ENCODE measurements at regions of chr1 and their contacts with region 1.

Region 1: DNA sequence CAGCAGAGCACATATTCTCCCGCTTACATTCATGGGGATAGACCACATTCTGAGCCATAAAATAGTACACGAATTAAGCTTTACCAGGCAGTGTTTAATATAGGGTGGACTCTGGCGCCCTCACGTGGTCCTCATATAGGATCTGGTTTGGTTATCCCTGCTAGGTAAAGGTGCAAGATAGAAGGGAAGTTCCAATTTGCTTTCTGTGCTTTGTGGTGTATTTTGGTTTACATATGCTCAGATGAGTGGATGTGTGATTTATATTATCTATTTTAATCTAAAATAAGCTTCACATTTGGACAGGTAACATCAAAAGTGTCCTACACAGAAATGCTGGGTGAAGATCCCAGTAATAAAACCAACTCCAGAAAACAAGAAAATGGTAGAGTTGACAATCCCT is 3.6 kb downstream of the CR1 start:
- DNase-seq: peak; percentile 55 to 69
- ATAC-seq: peak; percentile 89 to 92
- H3K4me3 ChIP-seq: no peak overlapping the region
- H3K27ac ChIP-seq: no peak overlapping the region
- H3K4me1 ChIP-seq: no peaks in the 10 kb centered on the region
- CTCF ChIP-seq: peak; percentile 92
- EP300 ChIP-seq: no peak
- POLR2A ChIP-seq: no peak
- RAD21 ChIP-seq: peak; percentile 92 to 95

Region 2: DNA sequence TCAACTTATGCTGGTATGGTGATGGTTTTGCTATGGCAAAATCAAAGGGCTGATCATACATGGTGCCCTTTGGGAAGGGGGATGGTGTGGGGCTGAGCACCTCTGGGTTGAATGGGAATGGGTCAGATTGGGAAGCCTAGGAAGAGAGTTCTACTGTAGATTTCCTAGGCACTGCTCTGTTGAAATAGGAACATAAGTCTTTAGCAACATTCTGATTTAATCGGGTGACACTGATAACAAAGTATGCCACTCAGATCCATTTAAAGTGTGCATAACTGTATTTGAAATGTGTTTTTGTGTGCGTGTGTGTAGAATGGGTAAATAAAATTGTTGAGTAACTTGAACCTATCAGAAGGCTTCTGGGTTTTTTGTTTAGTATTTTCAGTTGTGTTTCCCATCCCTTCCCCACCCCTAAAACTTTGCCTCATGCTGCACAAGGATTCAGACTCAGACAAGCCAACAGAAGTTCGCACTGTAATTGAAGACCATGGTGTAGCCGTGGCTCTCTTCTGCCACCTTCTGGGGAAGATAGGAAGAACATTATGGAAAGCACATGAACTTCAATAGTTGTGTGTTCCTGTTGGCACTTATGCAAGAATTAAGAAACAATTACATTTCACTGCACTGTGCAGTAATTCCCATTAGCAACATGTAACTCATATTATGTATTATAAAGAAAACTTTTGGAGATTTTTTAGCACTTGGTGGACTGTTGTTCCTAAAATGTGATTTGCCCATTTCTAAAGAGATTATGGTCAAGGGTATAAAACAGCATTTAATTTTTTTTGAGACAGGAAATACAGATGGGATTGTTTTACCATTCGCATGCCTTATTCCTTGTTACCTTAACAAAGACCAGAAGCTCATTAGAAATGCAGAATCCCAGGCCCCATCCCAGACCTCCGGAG is 421.8 kb before region 1 on chr1:
- CTCF ChIA-PET with region 1: interaction called, 44 read pairs
- POLR2A ChIA-PET with region 1: no interaction called
- DNase-seq: peak; percentile 62 to 78
- ATAC-seq: peak; percentile 67 to 93; a peak in 5 of 6 replicates
- H3K4me3 ChIP-seq: no peak overlapping the region
- H3K27ac ChIP-seq: peak overlapping the region; percentile 12 to 29; a peak in 1 of 6 replicates
- H3K4me1 ChIP-seq: peaks cover 28% of the 10 kb centered on the region
- CTCF ChIP-seq: peak; percentile 96
- EP300 ChIP-seq: no peak
- POLR2A ChIP-seq: no peak
- RAD21 ChIP-seq: peak; percentile 90 to 98

Region 3: DNA sequence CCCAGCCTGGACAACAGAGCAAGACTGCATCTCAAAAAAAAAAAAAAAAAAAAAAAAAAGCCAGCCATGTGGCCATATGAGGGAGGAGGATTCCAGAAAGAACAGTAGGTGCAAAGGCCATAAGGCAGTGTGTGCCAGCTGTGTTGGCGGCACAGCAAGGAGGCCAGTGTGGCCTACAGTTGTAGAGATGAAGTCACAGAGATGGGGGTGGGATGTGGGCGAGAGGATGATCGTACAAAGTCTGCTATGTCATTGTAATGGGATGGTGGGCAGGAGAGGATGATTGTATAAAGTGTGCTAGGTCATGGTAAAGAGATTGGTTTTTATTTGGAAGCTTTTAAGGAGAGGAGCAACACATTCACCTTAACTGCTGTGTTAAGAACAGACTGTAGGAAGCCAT is 13.4 kb before region 1 on chr1:
- CTCF ChIA-PET with region 1: interaction called, 17 read pairs
- POLR2A ChIA-PET with region 1: no interaction called
- DNase-seq: no peak
- ATAC-seq: no peak
- H3K4me3 ChIP-seq: no peak overlapping the region
- H3K27ac ChIP-seq: no peak overlapping the region
- H3K4me1 ChIP-seq: no peaks in the 10 kb centered on the region
- CTCF ChIP-seq: no peak
- EP300 ChIP-seq: no peak
- POLR2A ChIP-seq: no peak
- RAD21 ChIP-seq: no peak

Region 4: DNA sequence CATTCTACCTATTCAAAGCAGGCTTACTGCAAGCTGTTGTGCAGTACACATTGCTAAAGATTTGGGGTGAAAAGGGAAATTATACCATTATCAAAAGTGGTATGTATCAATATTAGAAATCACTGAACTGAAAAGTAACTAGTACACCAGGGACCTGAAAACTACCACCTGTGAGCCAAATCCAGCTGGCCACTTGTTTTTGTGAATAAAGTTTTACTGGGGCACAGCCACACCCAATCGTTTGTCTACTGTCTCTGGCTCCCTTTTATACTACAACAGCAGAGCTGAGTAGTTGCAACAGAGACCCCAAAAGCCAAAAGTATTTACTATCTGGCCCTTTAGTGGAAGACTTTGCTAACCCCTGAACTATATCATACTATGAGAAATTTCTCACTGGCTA is 131.6 kb after region 1 on chr1:
- CTCF ChIA-PET with region 1: no interaction called
- POLR2A ChIA-PET with region 1: no interaction called
- DNase-seq: no peak
- ATAC-seq: no peak
- H3K4me3 ChIP-seq: no peak overlapping the region
- H3K27ac ChIP-seq: no peak overlapping the region
- H3K4me1 ChIP-seq: peaks cover 4% of the 10 kb centered on the region; the same call in 1 of the 3 replicates
- CTCF ChIP-seq: no peak
- EP300 ChIP-seq: no peak
- POLR2A ChIP-seq: no peak
- RAD21 ChIP-seq: no peak

Region 5: GRCh38 chr1:207838156-207839082 is 338.8 kb after region 1 on chr1:
- CTCF ChIA-PET with region 1: no interaction called
- POLR2A ChIA-PET with region 1: no interaction called
- DNase-seq: no peak
- ATAC-seq: no peak; a peak in 1 of 6 replicates
- H3K4me3 ChIP-seq: no peak overlapping the region
- H3K27ac ChIP-seq: no peak overlapping the region
- H3K4me1 ChIP-seq: no peaks in the 10 kb centered on the region
- CTCF ChIP-seq: no peak
- EP300 ChIP-seq: no peak
- POLR2A ChIP-seq: no peak
- RAD21 ChIP-seq: no peak

Measured in A549 (cell line).